ENCODE measurements at regions of chr16 and their contacts with region 1.

Region 1: GRCh38 chr16:84617791-84618580 is at the start of gene COTL1:
- DNase-seq: peak; percentile 98
- H3K4me3 Mint-ChIP-seq: peak within 1 kb of the TSS; percentile 90
- H3K27ac Mint-ChIP-seq: peak within 1 kb of the TSS; percentile 63
- H3K4me1 Mint-ChIP-seq: peaks cover 25% of the 10 kb centered on the region
- H3K27me3 Mint-ChIP-seq: no peaks in the 10 kb centered on the region
- CTCF ChIP-seq: no peak
- total RNA-seq, gene COTL1: 151 and 269 TPM in 2 replicates

Region 2: DNA sequence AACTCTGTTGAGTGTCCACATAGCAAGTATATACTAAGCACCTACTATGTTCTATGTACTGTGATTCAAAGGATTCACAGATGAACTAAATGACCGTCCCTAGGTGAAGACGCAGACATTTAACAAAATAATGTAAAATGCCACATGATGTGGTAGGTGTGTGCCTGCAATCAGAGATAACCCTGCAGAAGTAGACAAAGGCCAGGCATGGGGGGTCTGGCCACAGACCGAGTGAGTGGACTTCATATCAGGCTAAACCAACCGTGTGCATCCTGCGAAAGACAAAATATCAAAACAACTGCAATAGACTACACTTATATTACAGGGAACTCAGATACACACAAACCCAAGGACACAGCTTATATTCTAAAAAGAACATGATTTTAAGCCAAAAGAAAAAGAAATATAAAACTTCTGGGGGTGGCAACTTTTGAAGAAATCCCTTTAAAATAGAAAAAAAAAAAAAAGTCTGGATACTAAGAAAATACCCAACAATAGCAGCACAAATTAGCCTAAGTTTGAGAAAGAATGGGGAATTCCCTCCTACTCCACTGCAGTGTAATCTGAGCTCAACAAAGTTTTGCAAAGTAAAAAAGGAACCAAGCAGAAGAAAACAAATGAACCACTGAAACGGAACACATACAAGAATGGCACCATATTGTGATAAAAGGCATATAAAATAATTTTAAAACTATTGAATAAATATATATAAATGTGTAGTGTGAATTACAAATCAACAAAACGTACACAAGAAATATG is 485.3 kb before region 1 on chr16:
- CTCF ChIA-PET with region 1: no interaction called
- POLR2A ChIA-PET with region 1: no interaction called
- intact Hi-C with region 1: no loop called
- DNase-seq: no peak
- H3K4me3 Mint-ChIP-seq: no peak overlapping the region
- H3K27ac Mint-ChIP-seq: no peak overlapping the region
- H3K4me1 Mint-ChIP-seq: peaks cover 5% of the 10 kb centered on the region
- H3K27me3 Mint-ChIP-seq: no peaks in the 10 kb centered on the region
- CTCF ChIP-seq: no peak

Region 3: GRCh38 chr16:84277237-84277823 is 340.7 kb before region 1 on chr16:
- CTCF ChIA-PET with region 1: interaction called, 4 read pairs
- POLR2A ChIA-PET with region 1: no interaction called
- intact Hi-C with region 1: loop called (anchors 5 kb)
- DNase-seq: peak; percentile 63
- H3K4me3 Mint-ChIP-seq: no peak overlapping the region
- H3K27ac Mint-ChIP-seq: no peak overlapping the region
- H3K4me1 Mint-ChIP-seq: no peaks in the 10 kb centered on the region
- H3K27me3 Mint-ChIP-seq: peaks cover 11% of the 10 kb centered on the region
- CTCF ChIP-seq: peak; percentile 80

Region 4: GRCh38 chr16:84511180-84511824 is 106.7 kb before region 1 on chr16:
- CTCF ChIA-PET with region 1: interaction called, 56 read pairs
- POLR2A ChIA-PET with region 1: interaction called, 9 read pairs
- intact Hi-C with region 1: loop called (anchors 1 kb)
- DNase-seq: peak; percentile 86
- H3K4me3 Mint-ChIP-seq: no peak overlapping the region
- H3K27ac Mint-ChIP-seq: no peak overlapping the region
- H3K4me1 Mint-ChIP-seq: no peaks in the 10 kb centered on the region
- H3K27me3 Mint-ChIP-seq: no peaks in the 10 kb centered on the region
- CTCF ChIP-seq: peak; percentile 87

Region 5: DNA sequence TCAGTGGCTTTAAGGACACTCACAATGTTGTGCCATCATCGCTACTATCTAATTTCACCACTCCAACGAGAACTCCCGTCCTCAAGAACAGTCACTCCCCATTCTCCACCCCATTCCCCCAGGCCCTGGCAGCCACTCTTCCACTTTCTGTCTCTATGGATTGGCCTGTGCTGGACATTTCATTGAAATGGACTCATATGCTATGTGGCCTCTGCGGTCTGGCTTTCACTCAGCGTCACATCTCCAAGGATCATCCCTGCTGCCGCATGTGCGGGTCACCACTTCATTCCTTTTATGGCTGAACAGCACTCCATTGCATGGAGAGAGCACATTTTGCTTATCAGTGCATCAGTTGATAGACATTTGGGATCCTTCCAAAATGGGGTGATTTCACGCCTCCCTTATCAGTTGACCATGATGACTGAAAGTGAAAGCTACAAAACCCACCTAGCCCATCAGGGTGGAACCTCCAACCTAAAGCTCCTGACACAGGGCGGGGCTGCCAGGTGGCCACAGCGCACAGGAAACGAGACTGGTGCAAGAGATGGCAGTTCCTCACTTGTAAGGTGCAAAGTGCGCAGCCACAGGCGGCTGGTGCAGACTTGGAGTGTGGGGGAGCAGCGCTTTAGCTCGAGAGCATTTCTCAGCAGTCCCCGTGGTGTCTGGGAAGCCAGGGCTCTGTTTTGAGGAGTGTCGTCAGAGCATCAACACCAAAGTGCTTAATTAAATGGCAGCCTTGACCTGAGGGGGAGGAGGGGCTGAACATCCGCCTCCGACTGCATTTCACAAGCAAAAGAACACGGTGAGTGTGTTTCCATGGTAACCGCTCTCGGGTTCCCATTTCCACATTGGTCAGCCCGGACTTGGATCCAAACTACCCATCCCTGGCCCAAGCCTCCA is 23.9 kb before region 1 on chr16:
- CTCF ChIA-PET with region 1: no interaction called
- POLR2A ChIA-PET with region 1: no interaction called
- intact Hi-C with region 1: no loop called
- DNase-seq: no peak
- H3K4me3 Mint-ChIP-seq: no peak overlapping the region
- H3K27ac Mint-ChIP-seq: no peak overlapping the region
- H3K4me1 Mint-ChIP-seq: no peaks in the 10 kb centered on the region
- H3K27me3 Mint-ChIP-seq: no peaks in the 10 kb centered on the region
- CTCF ChIP-seq: no peak

Region 6: GRCh38 chr16:84607694-84608093 is 10.3 kb before region 1 on chr16:
- CTCF ChIA-PET with region 1: interaction called, 12 read pairs
- POLR2A ChIA-PET with region 1: interaction called, 8 read pairs
- intact Hi-C with region 1: no loop called
- DNase-seq: no peak
- H3K4me3 Mint-ChIP-seq: no peak overlapping the region
- H3K27ac Mint-ChIP-seq: peak overlapping the region; percentile 24
- H3K4me1 Mint-ChIP-seq: peaks cover 10% of the 10 kb centered on the region
- H3K27me3 Mint-ChIP-seq: no peaks in the 10 kb centered on the region
- CTCF ChIP-seq: no peak

Region 7: DNA sequence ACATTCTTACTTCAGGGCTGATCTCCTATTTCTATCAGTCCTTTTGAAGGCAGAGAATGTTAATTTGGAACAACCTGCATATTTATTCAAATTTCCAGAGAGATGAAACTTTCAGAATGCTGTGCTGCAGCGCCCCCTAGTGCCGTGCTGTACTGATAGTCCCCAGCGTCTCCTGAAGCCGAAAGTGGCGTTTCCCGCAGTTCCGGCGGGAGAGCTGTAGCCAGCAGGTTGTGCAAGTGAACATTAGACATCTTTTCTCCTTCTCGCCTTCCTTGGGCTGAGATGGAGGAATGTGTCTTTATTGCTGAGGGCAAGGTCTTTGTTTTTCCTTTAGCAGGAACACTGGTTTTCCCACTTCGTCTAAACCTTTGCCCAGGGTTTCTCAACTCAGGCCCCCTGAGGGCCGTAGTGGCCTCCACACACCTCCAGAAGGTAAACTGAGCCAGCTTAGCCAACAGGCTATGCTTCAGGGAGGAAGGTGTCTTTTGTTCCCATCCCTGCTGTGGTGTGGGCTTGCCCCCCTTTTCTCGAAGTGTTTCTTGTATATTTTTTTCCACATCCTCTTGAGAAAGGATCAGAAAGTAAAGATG is 108.2 kb after region 1 on chr16:
- CTCF ChIA-PET with region 1: interaction called, 35 read pairs
- POLR2A ChIA-PET with region 1: interaction called, 12 read pairs
- intact Hi-C with region 1: loop called (anchors 2 kb)
- DNase-seq: peak; percentile 89
- H3K4me3 Mint-ChIP-seq: peak overlapping the region; percentile 28
- H3K27ac Mint-ChIP-seq: no peak overlapping the region
- H3K4me1 Mint-ChIP-seq: peaks cover 26% of the 10 kb centered on the region
- H3K27me3 Mint-ChIP-seq: no peaks in the 10 kb centered on the region
- CTCF ChIP-seq: peak; percentile 93

Region 8: DNA sequence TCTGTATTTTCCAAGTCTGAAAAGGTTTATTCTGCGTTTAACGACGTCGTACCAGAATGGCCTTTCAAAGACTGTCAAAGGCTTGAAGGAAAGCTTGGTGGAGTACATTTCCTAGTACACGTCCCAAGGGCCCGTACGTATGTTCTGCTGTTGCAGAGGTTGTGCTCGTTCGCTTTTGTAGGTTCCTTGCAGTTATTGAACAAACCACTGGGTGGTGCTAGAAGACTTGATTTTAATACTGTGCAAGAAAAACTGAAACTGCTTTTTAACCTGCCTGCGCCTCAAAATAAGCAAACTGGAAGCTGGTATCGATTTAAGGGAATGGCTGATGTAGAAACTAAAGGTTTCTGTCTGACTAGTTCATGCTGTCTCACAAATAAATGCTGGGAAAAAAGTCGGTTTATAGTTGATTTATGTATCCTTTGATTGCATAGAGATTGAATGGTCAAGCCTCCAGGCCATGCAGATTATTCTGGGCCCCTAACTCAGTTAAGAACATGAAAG is 136.4 kb after region 1 on chr16:
- CTCF ChIA-PET with region 1: interaction called, 10 read pairs
- POLR2A ChIA-PET with region 1: interaction called, 3 read pairs
- intact Hi-C with region 1: no loop called
- DNase-seq: peak; percentile 81
- H3K4me3 Mint-ChIP-seq: no peak overlapping the region
- H3K27ac Mint-ChIP-seq: peak overlapping the region; percentile 57
- H3K4me1 Mint-ChIP-seq: peaks cover 18% of the 10 kb centered on the region
- H3K27me3 Mint-ChIP-seq: no peaks in the 10 kb centered on the region
- CTCF ChIP-seq: peak; percentile 67

Region 9: GRCh38 chr16:84970447-84971127 is 352.6 kb after region 1 on chr16:
- CTCF ChIA-PET with region 1: no interaction called
- POLR2A ChIA-PET with region 1: no interaction called
- intact Hi-C with region 1: loop called (anchors 2 kb)
- DNase-seq: peak; percentile 76
- H3K4me3 Mint-ChIP-seq: no peak overlapping the region
- H3K27ac Mint-ChIP-seq: no peak overlapping the region
- H3K4me1 Mint-ChIP-seq: no peaks in the 10 kb centered on the region
- H3K27me3 Mint-ChIP-seq: peaks cover 5% of the 10 kb centered on the region
- CTCF ChIP-seq: peak; percentile 90

Measured in MCF 10A (cell line).